ENCODE measurements at regions of chr5 and their contacts with region 1.

Region 1: GRCh38 chr5:123344816-123345426 is 78.3 kb downstream of the CEP120 start:
- DNase-seq: peak; percentile 18
- ATAC-seq: no peak

Region 2: GRCh38 chr5:122896598-122897282 is 448.2 kb before region 1 on chr5:
- intact Hi-C with region 1: loop called in 1 of 2 experiments (anchors 1 kb)
- DNase-seq: no peak
- ATAC-seq: no peak

Region 3: GRCh38 chr5:123036391-123037103 is 308.4 kb before region 1 on chr5 and contains the start of gene PPIC:
- intact Hi-C with region 1: loop called in 1 of 2 experiments (anchors 10 kb)
- DNase-seq: peak; percentile 91
- ATAC-seq: peak; percentile 96
- total RNA-seq, gene PPIC: 50.6 to 53.4 TPM

Measured in left cardiac atrium (tissue), 4 donors.